ENCODE measurements at regions of chr1 and their contacts with region 1.

Region 1: DNA sequence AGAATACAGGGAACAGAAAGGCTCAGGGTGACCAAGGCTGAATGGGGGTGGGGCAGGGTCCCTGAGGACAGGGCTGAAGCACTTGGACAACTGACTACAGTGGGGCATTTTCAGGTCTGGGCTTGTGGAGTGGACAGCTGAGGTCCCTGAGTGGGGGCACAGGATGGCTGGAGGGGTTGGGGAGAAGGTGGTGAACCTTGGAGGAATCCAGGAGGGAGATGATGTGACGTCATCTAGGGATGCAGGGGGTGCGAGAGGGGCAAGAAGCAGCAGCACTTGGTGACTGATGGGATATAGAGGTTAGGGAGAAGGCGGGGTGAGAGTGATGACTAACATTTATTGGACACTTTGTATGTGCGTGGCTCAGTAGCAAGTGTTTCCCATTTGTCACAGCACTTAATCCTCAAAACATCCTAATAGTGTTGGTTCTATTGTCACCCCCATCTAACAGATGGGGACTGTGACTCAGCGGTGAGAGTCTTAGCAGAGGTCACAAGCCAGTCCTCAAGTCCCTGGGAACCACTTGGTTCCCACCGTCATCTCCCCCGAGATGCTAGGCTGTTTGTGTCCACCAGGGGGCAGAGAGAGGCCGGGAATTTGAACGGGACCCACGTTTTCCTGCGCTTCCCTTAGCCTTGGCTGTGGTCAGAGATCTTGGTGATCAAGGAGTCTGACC is 27.9 kb upstream of the BMP8B start:
- DNase-seq: peak; percentile 81
- ATAC-seq: peak; percentile 74

Region 2: GRCh38 chr1:39901698-39902459 is 85.3 kb after region 1 on chr1 and contains the start of gene MYCL:
- intact Hi-C with region 1: loop called (anchors 1 kb)
- DNase-seq: peak; percentile 87
- ATAC-seq: peak; percentile 85
- total RNA-seq, gene MYCL: 1.1 TPM

Region 3: GRCh38 chr1:39973503-39974135 is 157.1 kb after region 1 on chr1:
- intact Hi-C with region 1: loop called (anchors 1 kb)
- DNase-seq: peak; percentile 83
- ATAC-seq: peak; percentile 70

Region 4: DNA sequence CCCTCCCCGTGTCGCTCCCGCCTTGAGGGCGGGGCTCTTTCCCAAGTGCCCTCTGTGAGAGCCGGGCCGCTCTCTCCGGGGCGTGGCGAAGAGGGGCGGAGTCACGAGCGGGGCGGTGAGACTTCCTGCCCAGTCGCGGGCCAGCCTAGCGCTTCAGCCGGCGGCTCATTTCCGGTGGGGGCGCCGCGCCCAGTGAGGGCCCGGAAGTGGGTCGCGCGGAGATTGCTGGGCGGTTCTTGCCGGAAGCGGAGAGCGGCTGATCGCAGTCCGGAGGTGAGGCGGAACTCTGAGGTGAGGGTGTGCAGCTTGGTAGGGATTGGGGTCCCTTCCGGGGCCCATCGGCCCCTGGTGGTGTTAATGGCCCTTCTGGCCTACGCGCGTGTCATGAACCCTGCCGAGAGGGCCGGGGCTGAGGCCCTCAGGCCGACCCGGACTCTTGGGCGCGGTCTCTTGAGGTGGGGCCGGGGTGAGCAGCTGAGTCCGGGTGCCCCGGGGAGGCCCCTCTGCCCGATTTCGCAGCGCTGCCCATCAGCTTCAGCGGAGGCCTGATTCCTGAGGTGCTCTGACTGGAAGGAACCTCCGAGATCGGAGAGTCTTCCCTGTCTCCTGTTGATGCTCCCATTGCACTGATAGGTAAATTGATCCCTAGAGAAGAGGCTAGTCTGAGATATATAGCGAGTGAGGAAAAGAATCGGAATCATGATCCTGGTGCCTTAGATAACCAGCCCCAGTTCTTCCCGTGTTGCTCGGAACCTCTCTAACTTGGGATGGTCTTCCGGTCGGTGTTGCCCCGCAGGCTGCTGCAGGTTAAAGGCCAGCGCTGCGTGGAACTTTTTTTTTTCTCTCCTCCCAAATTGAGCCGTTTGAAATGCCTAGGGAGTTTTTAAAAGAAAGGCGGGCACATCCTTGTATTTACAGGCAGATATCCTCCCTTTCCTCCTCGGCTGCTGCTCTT is 224.2 kb after region 1 on chr1 and contains the start of gene CAP1:
- intact Hi-C with region 1: loop called (anchors 10 kb)
- DNase-seq: peak; percentile 100
- ATAC-seq: peak; percentile 96
- total RNA-seq, gene CAP1: 88.8 TPM